ENCODE measurements at regions of chr11 and their contacts with region 1.

Region 1: GRCh38 chr11:3341298-3341697 is 37.6 kb downstream of the ZNF195 start:
- DNase-seq: peak; percentile 60

Region 2: DNA sequence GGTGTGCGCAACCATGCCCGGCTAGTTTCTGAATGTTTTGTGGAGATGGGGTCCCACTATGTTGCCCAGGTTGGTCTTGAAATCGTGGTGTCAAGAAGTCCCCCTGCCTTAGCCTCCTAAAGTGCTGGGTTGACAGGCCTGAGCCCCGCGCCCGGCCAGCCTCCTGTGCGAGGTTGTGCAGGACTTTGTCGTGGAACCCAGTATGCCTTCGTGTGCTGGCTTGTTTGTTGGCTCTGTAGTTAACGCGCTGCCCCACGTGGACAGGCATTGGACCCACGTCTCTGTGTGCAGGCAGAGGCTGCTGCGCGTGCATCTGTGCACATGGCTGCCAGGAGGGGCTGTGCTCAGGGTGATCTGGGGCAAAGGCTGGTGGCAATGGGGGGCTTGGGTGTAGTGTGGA is 71.5 kb after region 1 on chr11:
- CTCF ChIA-PET with region 1: interaction called, 13 read pairs
- POLR2A ChIA-PET with region 1: no interaction called
- DNase-seq: no peak